Sigmoid colon (tissue), 7 donors: ENCODE measurements at regions of chr6 and their contacts with region 1.

Region 1: GRCh38 chr6:29632789-29633533 is at the start of gene GABBR1:
- DNase-seq: peak; percentile 96
- H3K4me3 ChIP-seq: peak within 1 kb of the TSS; percentile 76 to 89 (median 79)
- H3K27ac ChIP-seq: peak within 1 kb of the TSS; percentile 88 to 90 (median 89)
- H3K4me1 ChIP-seq: peaks cover 0 to 36% (median 31%) of the 10 kb centered on the region in 4 donors
- H3K27me3 ChIP-seq: no peaks in the 10 kb centered on the region
- CTCF ChIP-seq: no peak
- EP300 ChIP-seq: no peak
- POLR2A ChIP-seq: peak; percentile 4 to 74
- total RNA-seq, gene GABBR1: 26.5 to 73.9 (median 46.0) TPM

Region 2: DNA sequence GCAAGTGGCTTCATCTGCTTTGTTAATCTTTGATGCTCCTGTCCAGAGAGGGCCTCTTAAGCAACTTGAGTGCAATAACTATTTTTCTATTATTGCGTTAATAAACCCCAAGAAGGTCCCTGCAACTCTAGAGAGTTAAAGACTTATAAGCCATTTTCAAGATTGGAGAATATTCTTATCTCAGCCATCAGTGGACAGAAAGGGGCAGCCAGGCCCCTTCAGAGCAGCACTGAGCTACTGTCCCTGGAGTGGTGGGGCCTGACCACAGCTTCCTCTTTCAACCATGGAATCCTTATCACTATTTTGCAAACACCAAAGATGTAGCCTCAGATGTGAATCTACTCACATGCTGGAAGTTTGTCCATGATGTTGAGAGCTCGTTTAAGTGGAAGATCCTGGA is 142.4 kb before region 1 on chr6:
- intact Hi-C with region 1: no loop called
- DNase-seq: no peak
- H3K4me3 ChIP-seq: no peak overlapping the region
- H3K27ac ChIP-seq: no peak overlapping the region
- H3K4me1 ChIP-seq: no peaks in the 10 kb centered on the region
- H3K27me3 ChIP-seq: no peaks in the 10 kb centered on the region
- CTCF ChIP-seq: no peak
- EP300 ChIP-seq: no peak
- POLR2A ChIP-seq: no peak

Region 3: GRCh38 chr6:29649701-29650673 is 17.0 kb after region 1 on chr6:
- intact Hi-C with region 1: loop called (anchors 2 kb)
- DNase-seq: peak; percentile 99
- H3K4me3 ChIP-seq: peak overlapping the region; percentile 39 to 60 (median 58)
- H3K27ac ChIP-seq: peak overlapping the region; percentile 90 to 94 (median 92)
- H3K4me1 ChIP-seq: peaks cover 0 to 9% (median 4%) of the 10 kb centered on the region in 4 donors
- H3K27me3 ChIP-seq: no peaks in the 10 kb centered on the region
- CTCF ChIP-seq: peak; percentile 83 to 95 (median 88)
- EP300 ChIP-seq: peak in 2 of 4 donors; percentile 11 to 22
- POLR2A ChIP-seq: peak; percentile 37 to 59

Region 4: GRCh38 chr6:30066577-30067459 is 433.9 kb after region 1 on chr6 and contains the start of gene PPP1R11:
- intact Hi-C with region 1: loop called (anchors 10 kb)
- DNase-seq: peak; percentile 100
- H3K4me3 ChIP-seq: peak within 1 kb of the TSS; percentile 52 to 80 (median 62)
- H3K27ac ChIP-seq: peak within 1 kb of the TSS; percentile 81 to 93 (median 88)
- H3K4me1 ChIP-seq: peaks cover 0 to 42% (median 37%) of the 10 kb centered on the region in 4 donors
- H3K27me3 ChIP-seq: peaks cover 5 to 27% (median 16%) of the 10 kb centered on the region in 3 donors
- CTCF ChIP-seq: no peak
- EP300 ChIP-seq: peak in 1 of 4 donors; percentile 91
- POLR2A ChIP-seq: peak; percentile 86 to 93
- total RNA-seq, gene PPP1R11: 36.8 to 45.7 (median 42.2) TPM